ENCODE measurements at regions of chr3 and their contacts with region 1.

Region 1: GRCh38 chr3:99434190-99434589 is 204.2 kb upstream of the COL8A1 start:
- DNase-seq: no peak
- ATAC-seq: no peak
- H3K4me3 ChIP-seq: no peak overlapping the region
- H3K27ac ChIP-seq: no peak overlapping the region
- H3K4me1 ChIP-seq: no peaks in the 10 kb centered on the region
- H3K27me3 ChIP-seq: no peaks in the 10 kb centered on the region
- CTCF ChIP-seq: no peak

Region 2: DNA sequence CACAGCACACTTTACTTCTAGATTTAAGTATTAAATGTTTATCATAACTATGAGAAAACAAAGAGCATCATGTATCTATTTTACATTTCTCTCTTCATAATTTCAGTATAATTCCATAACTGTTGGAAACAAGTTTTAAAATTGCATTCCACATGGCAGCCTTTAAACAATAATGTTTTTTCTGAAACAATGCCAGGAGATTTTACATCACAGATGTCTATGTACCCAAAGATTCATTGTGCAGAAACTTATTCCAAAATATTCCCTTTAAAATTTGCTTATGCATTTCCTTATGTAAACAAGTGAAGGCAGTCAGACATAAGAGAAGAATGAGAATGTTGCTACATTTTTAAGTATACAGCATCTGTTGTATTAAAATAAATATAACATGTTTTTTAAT is 120.7 kb before region 1 on chr3:
- CTCF ChIA-PET with region 1: no interaction called
- POLR2A ChIA-PET with region 1: no interaction called
- in situ Hi-C with region 1: no loop called
- intact Hi-C with region 1: no loop called
- DNase-seq: no peak
- ATAC-seq: no peak
- H3K4me3 ChIP-seq: no peak overlapping the region
- H3K27ac ChIP-seq: no peak overlapping the region
- H3K4me1 ChIP-seq: no peaks in the 10 kb centered on the region
- H3K27me3 ChIP-seq: no peaks in the 10 kb centered on the region
- CTCF ChIP-seq: no peak

Region 3: DNA sequence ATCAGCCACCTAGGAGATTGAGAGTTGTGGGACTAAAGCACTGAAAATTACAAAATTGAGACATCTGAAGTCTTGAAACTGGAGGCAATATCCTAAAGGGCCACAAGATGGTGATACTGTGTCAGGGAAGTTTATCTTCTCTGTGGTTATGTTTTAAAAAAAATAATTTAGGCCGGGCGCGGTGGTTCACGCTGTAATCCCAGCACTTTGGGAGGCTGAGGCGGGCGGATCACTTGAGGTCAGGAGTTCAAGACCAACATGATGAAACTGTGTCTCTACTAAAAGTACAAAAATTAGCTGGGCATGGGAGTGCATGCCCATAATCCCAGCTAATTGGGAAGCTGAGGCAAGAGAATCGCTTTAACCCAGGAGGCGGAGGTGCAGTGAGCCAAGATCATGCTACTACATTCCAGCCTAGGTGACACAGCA is 882.5 kb after region 1 on chr3:
- CTCF ChIA-PET with region 1: interaction called, 11 read pairs
- POLR2A ChIA-PET with region 1: no interaction called
- in situ Hi-C with region 1: no loop called
- intact Hi-C with region 1: no loop called
- DNase-seq: peak; percentile 24
- ATAC-seq: peak; percentile 85
- H3K4me3 ChIP-seq: no peak overlapping the region
- H3K27ac ChIP-seq: no peak overlapping the region
- H3K4me1 ChIP-seq: no peaks in the 10 kb centered on the region
- H3K27me3 ChIP-seq: no peaks in the 10 kb centered on the region
- CTCF ChIP-seq: peak; percentile 84

Measured in Panc1 (cell line).